ENCODE measurements at regions of chr19 and their contacts with region 1.

Region 1: GRCh38 chr19:34241513-34242337 is 12.6 kb upstream of the GARRE1 start:
- DNase-seq: no peak
- ATAC-seq: no peak

Region 2: DNA sequence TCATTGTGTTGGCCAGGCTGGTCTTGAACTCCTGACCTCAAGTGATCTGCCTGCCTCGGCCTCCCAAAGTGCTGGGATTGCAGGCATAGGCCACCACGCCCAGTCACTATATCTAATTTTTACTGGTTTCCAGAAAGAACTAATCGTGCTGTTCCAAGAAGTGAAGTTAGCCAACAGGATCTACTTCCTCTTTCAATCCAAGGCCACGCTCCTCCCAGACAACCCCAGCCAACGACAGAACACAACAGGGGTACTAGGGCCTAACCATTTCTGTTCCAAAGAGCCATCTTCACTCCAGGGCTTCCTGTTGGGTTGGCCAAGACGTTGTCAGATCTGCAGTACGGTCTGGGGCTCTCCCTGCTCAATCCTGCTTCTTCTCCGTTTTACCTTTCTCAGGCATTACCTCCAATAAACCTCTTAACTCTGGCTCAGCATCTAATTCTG is 76.4 kb before region 1 on chr19:
- intact Hi-C with region 1: no loop called
- DNase-seq: no peak
- ATAC-seq: no peak

Region 3: DNA sequence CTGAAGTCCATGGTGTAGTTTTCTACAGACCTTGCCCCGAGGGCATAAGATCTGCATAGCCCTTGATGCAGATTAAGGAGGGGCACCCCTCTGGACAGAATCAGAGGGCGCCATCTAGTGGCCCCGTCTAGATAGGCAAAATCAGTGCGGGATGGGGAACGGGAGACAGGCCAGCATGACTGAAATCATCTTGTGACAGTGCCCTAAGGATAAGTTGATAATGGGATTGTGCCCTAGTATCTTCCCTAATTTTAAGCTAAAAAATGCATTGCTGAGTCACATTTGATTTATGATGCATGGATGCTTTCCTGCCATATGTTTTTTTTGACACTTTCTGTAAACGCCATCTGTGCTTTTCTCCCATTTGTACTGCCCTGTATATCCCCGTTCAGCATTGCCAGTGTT is 104.2 kb after region 1 on chr19:
- intact Hi-C with region 1: loop called in 1 of 2 experiments (anchors 10 kb)
- DNase-seq: peak; percentile 61
- ATAC-seq: peak; percentile 76 to 81

Measured in left cardiac atrium (tissue), 4 donors.